Activated CD4-positive, alpha-beta T cell treated with anti-CD3 and anti-CD28 coated beads, Interleukin-2, amount 10 ng/mL, durations not matched to agents 24 days and 14 days (primary cell): ENCODE measurements at regions of chr12 and their contacts with region 1.

Region 1: DNA sequence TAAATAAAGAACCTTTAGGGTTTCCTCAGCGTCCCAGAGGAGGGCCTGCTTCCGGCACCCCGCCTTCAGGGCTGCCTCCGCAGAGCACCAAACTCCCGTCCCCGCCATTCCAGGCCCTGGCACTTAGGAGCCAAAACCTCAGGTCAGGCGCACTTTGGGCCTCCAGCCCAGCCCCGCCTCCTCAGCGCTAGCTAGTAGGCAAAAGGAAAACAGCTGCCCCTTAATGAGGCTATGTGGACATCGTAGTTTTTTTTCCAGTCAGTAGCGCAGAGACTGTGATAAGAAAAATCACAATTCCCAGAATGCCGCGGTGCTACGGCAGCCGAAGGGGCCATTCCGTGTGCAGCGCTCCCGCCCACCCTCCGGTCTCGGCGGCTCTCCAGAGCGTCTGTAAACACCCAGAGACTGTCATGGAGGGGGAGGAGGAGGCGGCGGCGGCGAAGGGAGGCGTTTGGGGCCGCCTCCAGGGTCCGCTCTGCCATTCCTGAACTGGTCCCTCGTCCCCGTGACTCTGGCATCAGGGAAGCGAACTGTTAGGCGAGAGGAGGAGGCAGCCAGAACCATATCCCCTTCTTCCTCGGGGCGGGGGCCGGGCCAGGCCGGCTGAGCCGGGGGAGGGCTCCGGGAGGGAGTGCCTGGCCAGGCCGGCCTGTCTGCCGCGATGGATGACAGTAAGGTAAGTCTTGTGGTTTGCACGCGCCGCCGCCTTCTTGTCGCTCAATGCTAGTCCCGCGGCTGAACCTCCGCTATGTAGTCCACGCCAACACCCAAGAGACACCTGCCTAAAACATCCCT is at the start of gene CREBL2:
- DNase-seq: peak; percentile 95
- H3K4me3 Mint-ChIP-seq: peak within 1 kb of the TSS; percentile 99
- H3K27ac Mint-ChIP-seq: peak within 1 kb of the TSS; percentile 98
- H3K4me1 Mint-ChIP-seq: peaks cover 48% of the 10 kb centered on the region
- H3K27me3 Mint-ChIP-seq: no peaks in the 10 kb centered on the region
- total RNA-seq, gene CREBL2: 17.3 TPM in 2 replicates

Region 2: GRCh38 chr12:12376646-12377448 is 234.9 kb before region 1 on chr12:
- intact Hi-C with region 1: loop called (anchors 1 kb)
- DNase-seq: peak; percentile 79
- H3K4me3 Mint-ChIP-seq: no peak overlapping the region
- H3K27ac Mint-ChIP-seq: peak overlapping the region; percentile 35
- H3K4me1 Mint-ChIP-seq: peaks cover 23% of the 10 kb centered on the region
- H3K27me3 Mint-ChIP-seq: no peaks in the 10 kb centered on the region

Region 3: DNA sequence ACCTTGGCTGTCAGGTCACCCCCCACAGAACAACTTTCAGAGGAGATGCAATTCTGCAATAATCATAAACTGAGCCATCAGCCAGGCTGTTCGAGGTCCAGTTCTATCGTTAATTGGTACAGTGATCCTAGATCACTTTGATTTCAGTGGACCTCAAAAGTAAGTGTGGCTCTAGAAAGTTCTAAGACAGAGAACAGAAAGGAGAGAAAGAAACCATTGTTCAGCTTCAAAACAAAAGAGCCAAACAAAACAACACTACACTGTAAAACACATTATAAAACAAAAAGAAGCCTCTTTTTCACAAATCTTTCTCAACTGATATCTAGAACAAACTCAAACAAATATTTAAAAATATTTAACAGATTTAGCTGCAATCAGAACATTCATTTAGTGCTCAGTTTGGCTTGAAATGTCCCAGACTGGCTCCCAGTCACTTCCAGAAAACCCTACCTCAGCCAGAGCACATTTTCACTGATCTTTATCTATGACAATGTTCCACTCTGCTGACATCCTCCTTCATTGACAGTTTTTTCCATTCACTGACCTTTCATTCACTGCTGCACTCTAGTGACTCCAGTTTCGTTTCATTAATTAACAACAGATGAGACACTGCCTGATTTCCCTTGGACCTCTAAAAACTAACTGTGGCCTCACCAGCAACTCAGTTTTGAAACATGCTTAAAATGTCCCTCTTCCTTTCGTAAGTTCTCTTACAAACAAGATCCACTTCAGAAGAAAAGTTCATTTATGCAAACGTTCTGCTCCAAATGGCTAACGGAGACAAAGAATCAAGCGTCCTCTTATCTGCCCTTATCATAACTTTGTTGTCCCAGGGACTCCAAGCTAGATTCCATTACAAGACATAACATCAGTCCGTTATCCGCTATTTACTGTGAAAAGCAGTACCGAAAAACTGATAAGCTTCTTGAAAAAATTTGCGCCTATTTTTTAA is 105.9 kb before region 1 on chr12:
- intact Hi-C with region 1: loop called (anchors 5 kb)
- DNase-seq: peak; percentile 78
- H3K4me3 Mint-ChIP-seq: peak overlapping the region; percentile 64
- H3K27ac Mint-ChIP-seq: peak overlapping the region; percentile 94
- H3K4me1 Mint-ChIP-seq: peaks cover 63% of the 10 kb centered on the region
- H3K27me3 Mint-ChIP-seq: peaks cover 1% of the 10 kb centered on the region

Region 4: DNA sequence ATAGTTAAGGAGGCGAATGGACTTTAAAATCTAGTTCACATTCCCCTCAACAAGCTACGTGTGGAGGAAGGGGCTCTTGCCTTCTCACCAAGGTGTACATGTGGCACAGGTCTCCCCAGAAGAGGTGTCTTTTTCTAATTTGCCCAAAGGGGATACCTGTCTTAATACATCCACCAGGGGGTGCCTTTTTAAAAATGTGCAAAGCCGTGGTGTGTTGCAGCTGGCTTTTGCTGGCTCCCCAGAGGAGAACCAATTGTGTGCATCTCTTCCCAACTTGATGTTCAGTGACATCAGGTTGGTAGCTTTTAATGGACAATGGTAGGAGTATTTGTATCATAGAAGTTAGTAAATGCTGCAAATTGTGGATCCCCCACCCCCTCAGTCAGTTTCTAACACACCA is 33.8 kb after region 1 on chr12:
- intact Hi-C with region 1: loop called (anchors 5 kb)
- DNase-seq: peak; percentile 80
- H3K4me3 Mint-ChIP-seq: no peak overlapping the region
- H3K27ac Mint-ChIP-seq: peak overlapping the region; percentile 79
- H3K4me1 Mint-ChIP-seq: peaks cover 14% of the 10 kb centered on the region
- H3K27me3 Mint-ChIP-seq: no peaks in the 10 kb centered on the region

Region 5: GRCh38 chr12:12716793-12717585 is 105.3 kb after region 1 on chr12 and contains the start of gene CDKN1B:
- intact Hi-C with region 1: loop called (anchors 5 kb)
- DNase-seq: peak; percentile 94
- H3K4me3 Mint-ChIP-seq: peak within 1 kb of the TSS; percentile 97
- H3K27ac Mint-ChIP-seq: peak within 1 kb of the TSS; percentile 99
- H3K4me1 Mint-ChIP-seq: peaks cover 57% of the 10 kb centered on the region
- H3K27me3 Mint-ChIP-seq: no peaks in the 10 kb centered on the region
- total RNA-seq, gene CDKN1B: 47.4 and 48.5 TPM in 2 replicates